Mammary epithelial cell (primary cell): ENCODE measurements at regions of chr4 and their contacts with region 1.

Region 1: DNA sequence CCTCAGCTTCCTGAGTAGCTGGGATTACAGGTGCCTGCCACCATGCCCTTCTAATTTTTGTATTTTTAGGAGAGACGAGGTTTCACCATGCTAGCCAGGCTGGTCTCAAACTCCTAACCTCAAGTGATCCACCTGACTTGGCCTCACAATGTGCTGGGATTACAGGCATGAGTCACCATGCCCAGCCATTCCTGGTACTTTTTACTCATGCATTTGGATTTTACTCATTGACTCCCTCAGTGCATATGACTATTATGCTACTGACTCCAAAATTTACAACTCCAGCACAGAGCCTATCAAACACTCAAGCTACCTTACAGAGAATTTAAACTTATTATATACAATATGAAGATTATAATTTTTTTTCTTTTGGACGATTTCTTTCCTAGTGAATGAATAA is 199.9 kb downstream of the CXXC4 start:
- DNase-seq: peak; percentile 11
- H3K4me3 ChIP-seq: no peak overlapping the region
- H3K27ac ChIP-seq: no peak overlapping the region
- H3K4me1 ChIP-seq: no peaks in the 10 kb centered on the region
- H3K27me3 ChIP-seq: no peaks in the 10 kb centered on the region
- CTCF ChIP-seq: no peak

Region 2: DNA sequence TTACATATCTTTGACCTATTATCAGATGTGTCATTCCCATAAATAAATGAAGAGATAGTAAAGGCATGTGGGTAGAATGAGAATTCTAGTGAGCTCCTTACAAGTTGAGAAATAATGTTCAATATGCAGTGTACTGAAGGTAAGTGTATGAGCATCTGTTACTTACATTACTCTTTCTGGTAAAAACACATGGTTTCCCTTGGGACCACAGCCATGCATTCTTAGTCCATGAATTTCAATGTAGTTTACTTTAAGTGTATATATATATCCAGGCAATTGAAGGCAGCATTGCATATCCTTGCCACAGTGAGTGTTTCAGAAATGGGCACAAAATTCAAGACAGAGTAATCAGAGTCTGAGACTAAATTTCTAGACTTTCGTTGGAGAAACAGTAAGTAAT is 77.3 kb before region 1 on chr4:
- CTCF ChIA-PET with region 1: no interaction called
- dilution Hi-C with region 1: no loop called
- in situ Hi-C with region 1: no loop called
- intact Hi-C with region 1: no loop called
- DNase-seq: no peak
- H3K4me3 ChIP-seq: no peak overlapping the region
- H3K27ac ChIP-seq: no peak overlapping the region
- H3K4me1 ChIP-seq: no peaks in the 10 kb centered on the region
- H3K27me3 ChIP-seq: no peaks in the 10 kb centered on the region
- CTCF ChIP-seq: no peak

Region 3: GRCh38 chr4:104235967-104236366 is 58.8 kb before region 1 on chr4:
- CTCF ChIA-PET with region 1: no interaction called
- dilution Hi-C with region 1: no loop called
- in situ Hi-C with region 1: no loop called
- intact Hi-C with region 1: no loop called
- DNase-seq: no peak
- H3K4me3 ChIP-seq: no peak overlapping the region
- H3K27ac ChIP-seq: no peak overlapping the region
- H3K4me1 ChIP-seq: no peaks in the 10 kb centered on the region
- H3K27me3 ChIP-seq: no peaks in the 10 kb centered on the region
- CTCF ChIP-seq: no peak

Region 4: GRCh38 chr4:104279744-104280143 is 15.1 kb before region 1 on chr4:
- CTCF ChIA-PET with region 1: no interaction called
- dilution Hi-C with region 1: no loop called
- in situ Hi-C with region 1: no loop called
- intact Hi-C with region 1: no loop called
- DNase-seq: no peak
- H3K4me3 ChIP-seq: no peak overlapping the region
- H3K27ac ChIP-seq: no peak overlapping the region
- H3K4me1 ChIP-seq: no peaks in the 10 kb centered on the region
- H3K27me3 ChIP-seq: peaks cover 1% of the 10 kb centered on the region
- CTCF ChIP-seq: no peak

Region 5: DNA sequence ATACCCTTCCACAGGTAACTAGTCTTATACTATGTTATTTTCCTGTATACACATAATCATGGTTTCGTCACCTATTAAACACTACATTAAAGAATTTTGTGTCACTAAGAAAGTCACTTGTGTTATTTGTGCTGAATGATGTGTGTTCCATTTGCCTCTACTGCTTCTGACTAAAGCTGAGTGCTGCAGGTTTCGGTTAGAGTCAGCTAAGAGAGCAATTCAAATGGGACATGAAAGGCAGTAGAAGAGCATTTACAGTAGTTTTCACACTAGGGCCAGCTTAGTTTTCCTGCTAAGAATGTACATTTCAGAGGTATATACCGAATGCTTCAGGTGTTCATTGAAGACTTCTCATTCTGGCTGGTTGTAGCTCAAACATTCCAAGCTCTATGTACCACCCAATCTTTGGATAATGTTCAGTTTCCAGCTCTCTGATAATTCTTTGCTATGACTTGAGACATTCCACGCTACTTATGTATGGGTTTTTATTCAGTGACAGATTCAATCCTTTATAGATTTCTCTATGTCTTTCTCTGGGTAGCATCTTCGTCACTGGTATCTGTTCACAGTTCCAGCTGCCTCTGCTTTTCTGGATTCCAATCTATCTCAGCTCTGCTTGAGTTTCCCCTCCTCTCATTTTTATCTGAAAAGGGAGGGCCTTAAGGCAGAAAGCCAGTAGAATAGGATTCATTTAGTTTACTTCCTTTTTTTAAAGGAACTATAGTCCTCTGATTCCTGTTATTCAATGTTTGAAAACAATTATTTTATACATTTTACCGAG is 35.5 kb after region 1 on chr4:
- CTCF ChIA-PET with region 1: no interaction called
- dilution Hi-C with region 1: loop called (anchors 5 kb)
- in situ Hi-C with region 1: no loop called
- intact Hi-C with region 1: no loop called
- DNase-seq: no peak
- H3K4me3 ChIP-seq: no peak overlapping the region
- H3K27ac ChIP-seq: no peak overlapping the region
- H3K4me1 ChIP-seq: no peaks in the 10 kb centered on the region
- H3K27me3 ChIP-seq: no peaks in the 10 kb centered on the region
- CTCF ChIP-seq: no peak